ENCODE measurements at regions of chr10 and their contacts with region 1.

Region 1: GRCh38 chr10:104121520-104122224 is at the start of gene SFR1:
- DNase-seq: peak; percentile 96
- ATAC-seq: peak; percentile 71
- H3K4me3 ChIP-seq: peak within 1 kb of the TSS; percentile 91
- H3K27ac ChIP-seq: peak within 1 kb of the TSS; percentile 99
- H3K4me1 ChIP-seq: peaks cover 48% of the 10 kb centered on the region
- H3K27me3 ChIP-seq: no peaks in the 10 kb centered on the region
- CTCF ChIP-seq: peak; percentile 60
- total RNA-seq, gene SFR1: 2.9 and 4.7 TPM in 2 replicates

Region 2: DNA sequence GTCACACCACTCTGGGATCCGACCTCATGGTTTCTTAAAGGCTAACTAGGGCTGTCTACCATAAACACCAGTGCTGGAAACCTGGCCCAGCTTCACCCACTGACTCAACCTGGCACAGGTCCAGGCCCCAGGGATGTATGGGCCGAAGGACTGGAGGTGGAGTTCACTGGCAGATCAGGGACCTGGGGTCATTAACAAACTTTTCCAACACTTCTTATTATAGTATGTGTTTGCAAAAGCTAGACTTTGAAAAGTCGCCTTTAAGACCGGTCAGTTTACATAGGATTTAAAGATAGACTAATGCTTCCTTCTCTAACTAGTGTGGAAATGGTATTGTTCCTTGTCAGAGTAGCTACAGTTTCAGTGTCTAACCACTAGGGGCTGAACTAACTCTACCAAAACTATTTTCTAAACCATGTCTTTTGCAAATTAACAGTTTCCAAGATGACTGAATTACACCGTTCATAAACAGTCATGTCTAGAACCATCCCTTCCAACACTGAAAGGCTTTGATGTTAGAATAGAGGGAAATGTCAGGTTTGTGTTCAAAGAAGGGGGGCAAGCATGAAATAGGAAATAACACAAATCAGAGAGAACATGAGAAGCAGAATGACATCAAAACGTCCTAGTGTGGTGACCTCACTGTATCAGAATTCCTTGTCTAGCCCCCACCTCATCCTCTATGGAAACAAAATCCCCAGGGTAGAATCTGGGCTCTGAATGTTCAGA is 233.4 kb before region 1 on chr10:
- CTCF ChIA-PET with region 1: interaction called, 3 read pairs
- POLR2A ChIA-PET with region 1: interaction called, 11 read pairs
- intact Hi-C with region 1: loop called (anchors 1 kb)
- DNase-seq: peak; percentile 83
- ATAC-seq: peak; percentile 31
- H3K4me3 ChIP-seq: no peak overlapping the region
- H3K27ac ChIP-seq: peak overlapping the region; percentile 100
- H3K4me1 ChIP-seq: peaks cover 51% of the 10 kb centered on the region
- H3K27me3 ChIP-seq: no peaks in the 10 kb centered on the region
- CTCF ChIP-seq: peak; percentile 87

Region 3: GRCh38 chr10:103991393-103992128 is 130.1 kb before region 1 on chr10:
- CTCF ChIA-PET with region 1: no interaction called
- POLR2A ChIA-PET with region 1: interaction called, 10 read pairs
- intact Hi-C with region 1: no loop called
- DNase-seq: peak; percentile 51
- ATAC-seq: peak; percentile 84
- H3K4me3 ChIP-seq: no peak overlapping the region
- H3K27ac ChIP-seq: no peak overlapping the region
- H3K4me1 ChIP-seq: peaks cover 12% of the 10 kb centered on the region; the same call in 1 of the 2 replicates
- H3K27me3 ChIP-seq: no peaks in the 10 kb centered on the region
- CTCF ChIP-seq: no peak

Region 4: GRCh38 chr10:104002911-104003310 is 118.8 kb before region 1 on chr10:
- CTCF ChIA-PET with region 1: no interaction called
- POLR2A ChIA-PET with region 1: no interaction called
- intact Hi-C with region 1: no loop called
- DNase-seq: no peak
- ATAC-seq: no peak
- H3K4me3 ChIP-seq: no peak overlapping the region
- H3K27ac ChIP-seq: no peak overlapping the region
- H3K4me1 ChIP-seq: no peaks in the 10 kb centered on the region
- H3K27me3 ChIP-seq: no peaks in the 10 kb centered on the region
- CTCF ChIP-seq: no peak

Region 5: DNA sequence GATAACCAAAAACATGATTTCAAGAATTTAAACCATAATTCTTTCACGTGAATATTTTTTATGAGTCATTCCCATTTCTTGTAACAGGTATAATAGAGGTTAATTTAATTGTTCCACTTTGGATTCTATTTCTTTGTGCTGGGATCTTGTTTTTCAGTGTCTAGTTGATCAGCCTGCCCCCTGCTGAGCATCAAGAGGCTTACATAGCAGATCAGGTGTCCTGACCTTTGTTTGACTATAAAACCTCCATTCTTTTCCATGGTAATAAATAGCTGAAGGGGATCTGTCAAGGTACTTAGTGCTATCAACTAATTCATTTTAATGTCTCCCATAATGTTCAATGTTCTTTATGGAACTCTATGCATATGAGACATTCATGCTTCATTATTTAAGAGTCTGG is 40.9 kb before region 1 on chr10:
- CTCF ChIA-PET with region 1: interaction called, 3 read pairs
- POLR2A ChIA-PET with region 1: no interaction called
- intact Hi-C with region 1: loop called (anchors 5 kb)
- DNase-seq: peak; percentile 38
- ATAC-seq: no peak
- H3K4me3 ChIP-seq: no peak overlapping the region
- H3K27ac ChIP-seq: no peak overlapping the region
- H3K4me1 ChIP-seq: peaks cover 16% of the 10 kb centered on the region
- H3K27me3 ChIP-seq: no peaks in the 10 kb centered on the region
- CTCF ChIP-seq: peak; percentile 67

Region 6: GRCh38 chr10:104109908-104110662 is 11.6 kb before region 1 on chr10:
- CTCF ChIA-PET with region 1: no interaction called
- POLR2A ChIA-PET with region 1: interaction called, 5 read pairs
- intact Hi-C with region 1: loop called (anchors 1 kb)
- DNase-seq: peak; percentile 88
- ATAC-seq: peak; percentile 98
- H3K4me3 ChIP-seq: no peak overlapping the region
- H3K27ac ChIP-seq: peak overlapping the region; percentile 83
- H3K4me1 ChIP-seq: peaks cover 20% of the 10 kb centered on the region
- H3K27me3 ChIP-seq: no peaks in the 10 kb centered on the region
- CTCF ChIP-seq: no peak

Region 7: GRCh38 chr10:104231784-104232612 is 110.3 kb after region 1 on chr10 and contains the start of gene CFAP43:
- CTCF ChIA-PET with region 1: interaction called, 10 read pairs
- POLR2A ChIA-PET with region 1: no interaction called
- intact Hi-C with region 1: no loop called
- DNase-seq: peak; percentile 96
- ATAC-seq: peak; percentile 100
- H3K4me3 ChIP-seq: peak within 1 kb of the TSS; percentile 95
- H3K27ac ChIP-seq: no peak within 1 kb of the TSS
- H3K4me1 ChIP-seq: no peaks in the 10 kb centered on the region
- H3K27me3 ChIP-seq: no peaks in the 10 kb centered on the region
- CTCF ChIP-seq: no peak
- total RNA-seq, gene CFAP43: 0.17 and 0.44 TPM in 2 replicates

Region 8: DNA sequence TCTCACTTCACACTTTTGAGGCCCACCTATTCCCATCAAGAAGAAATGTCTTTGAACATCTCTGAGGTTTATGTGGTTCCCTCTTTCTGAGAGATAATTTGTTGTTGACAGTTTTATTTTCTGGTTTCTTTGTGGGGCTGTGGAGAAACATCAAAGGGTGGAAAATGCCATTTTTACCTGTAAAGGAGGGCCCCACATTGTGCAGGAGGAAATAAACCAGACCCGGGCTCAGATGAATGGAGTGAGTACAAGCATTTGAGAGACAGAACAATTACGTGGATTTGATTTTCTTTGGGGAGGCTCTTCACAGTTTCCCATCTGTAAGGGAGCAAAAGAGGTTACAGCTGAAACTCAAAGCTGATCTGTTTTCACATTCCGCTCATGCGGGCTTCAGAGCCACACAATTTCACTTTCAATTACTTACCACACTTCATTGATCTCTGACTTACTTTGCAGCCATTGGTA is 186.8 kb after region 1 on chr10:
- CTCF ChIA-PET with region 1: no interaction called
- POLR2A ChIA-PET with region 1: no interaction called
- intact Hi-C with region 1: no loop called
- DNase-seq: no peak
- ATAC-seq: no peak
- H3K4me3 ChIP-seq: no peak overlapping the region
- H3K27ac ChIP-seq: no peak overlapping the region
- H3K4me1 ChIP-seq: peaks cover 30% of the 10 kb centered on the region
- H3K27me3 ChIP-seq: no peaks in the 10 kb centered on the region
- CTCF ChIP-seq: no peak

Region 9: GRCh38 chr10:104353325-104354048 is 231.8 kb after region 1 on chr10 and contains the start of gene CFAP58:
- CTCF ChIA-PET with region 1: no interaction called
- POLR2A ChIA-PET with region 1: no interaction called
- intact Hi-C with region 1: no loop called
- DNase-seq: peak; percentile 91
- ATAC-seq: peak; percentile 79
- H3K4me3 ChIP-seq: peak within 1 kb of the TSS; percentile 65
- H3K27ac ChIP-seq: no peak within 1 kb of the TSS
- H3K4me1 ChIP-seq: peaks cover 41% of the 10 kb centered on the region
- H3K27me3 ChIP-seq: 0 out of 2 replicates have a peak, but pooled peaks cover 8% of the 10 kb centered on the region
- CTCF ChIP-seq: peak; percentile 54
- total RNA-seq, gene CFAP58: 0.26 TPM in 1 of 2 replicates, not detected in the other

Measured in PC-3 (cell line).